MCF 10A (cell line): ENCODE measurements at regions of chr22 and their contacts with region 1.

Region 1: GRCh38 chr22:37741312-37741795 is 44.5 kb downstream of the TRIOBP start:
- DNase-seq: peak; percentile 96
- H3K4me3 Mint-ChIP-seq: no peak overlapping the region
- H3K27ac Mint-ChIP-seq: no peak overlapping the region
- H3K4me1 Mint-ChIP-seq: peaks cover 25% of the 10 kb centered on the region
- H3K27me3 Mint-ChIP-seq: no peaks in the 10 kb centered on the region
- CTCF ChIP-seq: no peak

Region 2: DNA sequence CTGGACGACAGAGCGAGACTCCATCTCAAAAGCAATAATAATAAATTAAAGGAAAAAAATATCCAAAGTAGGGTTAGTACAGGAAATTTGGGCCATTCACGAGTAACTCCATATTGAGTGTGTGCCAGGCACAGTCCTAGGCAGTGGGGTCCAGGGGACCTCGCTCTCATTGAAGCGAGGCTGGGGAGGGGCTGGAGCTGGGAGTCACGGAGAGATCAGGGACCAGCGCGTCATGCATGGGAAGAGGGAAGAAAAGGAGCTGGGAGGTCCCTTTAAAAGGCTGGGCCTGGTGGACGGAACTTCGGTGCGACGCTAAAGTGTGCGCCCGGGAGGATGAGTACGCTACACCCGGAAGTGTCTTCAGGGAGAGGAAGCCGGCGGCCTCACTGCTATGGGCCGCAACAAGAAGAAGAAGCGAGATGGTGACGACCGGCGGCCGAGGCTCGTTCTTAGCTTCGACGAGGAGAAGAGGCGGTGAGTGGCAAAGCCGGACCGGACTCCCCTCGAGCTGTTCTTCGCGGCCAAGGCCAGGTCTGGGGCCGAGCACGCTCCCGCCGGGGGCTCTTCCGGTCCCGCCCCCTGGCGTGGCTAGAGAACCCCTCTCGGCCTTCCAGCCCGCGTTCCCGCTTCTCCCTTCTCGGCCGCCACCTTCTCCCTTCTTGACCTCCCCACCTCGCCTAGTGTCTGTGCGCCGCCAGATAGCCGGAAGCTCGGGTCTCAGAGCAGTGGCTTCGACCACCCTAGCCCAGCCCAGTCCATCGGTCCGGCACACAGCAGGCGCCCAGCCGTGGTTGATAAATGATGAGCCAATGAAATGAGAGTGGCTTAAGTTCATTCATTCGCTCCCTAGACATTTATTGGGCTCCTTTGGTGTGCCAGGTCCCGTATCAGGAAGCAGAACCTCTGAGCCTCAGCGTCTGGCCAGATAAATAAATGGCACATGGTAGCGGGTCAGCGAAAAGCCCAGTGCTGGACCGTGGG is 55.1 kb before region 1 on chr22 and contains the start of gene NOL12:
- CTCF ChIA-PET with region 1: interaction called, 3 read pairs
- POLR2A ChIA-PET with region 1: interaction called, 17 read pairs
- intact Hi-C with region 1: no loop called
- DNase-seq: peak; percentile 90
- H3K4me3 Mint-ChIP-seq: peak within 1 kb of the TSS; percentile 96
- H3K27ac Mint-ChIP-seq: peak within 1 kb of the TSS; percentile 96
- H3K4me1 Mint-ChIP-seq: peaks cover 30% of the 10 kb centered on the region
- H3K27me3 Mint-ChIP-seq: no peaks in the 10 kb centered on the region
- CTCF ChIP-seq: no peak
- total RNA-seq, gene NOL12: 47.1 and 50.8 TPM in 2 replicates

Region 3: DNA sequence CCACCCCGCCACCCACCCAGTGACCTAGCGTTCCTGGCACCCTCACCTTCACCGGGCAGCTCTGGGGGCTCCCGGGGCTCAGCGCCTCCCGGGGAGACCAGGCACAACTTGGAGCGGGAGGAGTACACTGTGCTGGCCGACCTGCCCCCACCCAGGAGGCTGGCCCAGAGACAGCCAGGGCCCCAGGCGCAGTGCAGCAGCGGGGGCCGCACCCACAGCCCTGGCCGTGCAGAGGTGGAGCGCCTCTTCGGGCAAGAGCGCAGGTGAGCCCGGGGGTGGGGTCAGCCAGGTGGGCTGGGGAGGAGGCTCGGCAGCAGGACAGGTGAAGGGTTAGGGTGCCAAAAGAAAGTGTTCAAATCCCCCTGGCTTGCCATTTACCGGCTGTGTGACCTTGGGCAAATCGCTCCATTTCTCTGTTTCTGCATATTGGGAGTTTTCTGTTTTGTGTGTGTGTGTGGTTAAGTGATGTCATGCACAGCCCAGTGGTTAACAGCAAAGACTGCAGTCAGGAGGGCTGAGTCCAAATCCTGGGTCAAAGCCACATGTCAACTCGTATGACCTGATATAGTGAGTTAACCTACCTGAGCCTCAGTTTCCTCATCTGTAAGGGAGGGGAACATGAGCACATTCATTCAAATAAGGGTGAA is 15.0 kb before region 1 on chr22:
- CTCF ChIA-PET with region 1: interaction called, 6 read pairs
- POLR2A ChIA-PET with region 1: interaction called, 14 read pairs
- intact Hi-C with region 1: no loop called
- DNase-seq: peak; percentile 31
- H3K4me3 Mint-ChIP-seq: no peak overlapping the region
- H3K27ac Mint-ChIP-seq: no peak overlapping the region
- H3K4me1 Mint-ChIP-seq: no peaks in the 10 kb centered on the region
- H3K27me3 Mint-ChIP-seq: peaks cover 20% of the 10 kb centered on the region
- CTCF ChIP-seq: no peak

Region 4: DNA sequence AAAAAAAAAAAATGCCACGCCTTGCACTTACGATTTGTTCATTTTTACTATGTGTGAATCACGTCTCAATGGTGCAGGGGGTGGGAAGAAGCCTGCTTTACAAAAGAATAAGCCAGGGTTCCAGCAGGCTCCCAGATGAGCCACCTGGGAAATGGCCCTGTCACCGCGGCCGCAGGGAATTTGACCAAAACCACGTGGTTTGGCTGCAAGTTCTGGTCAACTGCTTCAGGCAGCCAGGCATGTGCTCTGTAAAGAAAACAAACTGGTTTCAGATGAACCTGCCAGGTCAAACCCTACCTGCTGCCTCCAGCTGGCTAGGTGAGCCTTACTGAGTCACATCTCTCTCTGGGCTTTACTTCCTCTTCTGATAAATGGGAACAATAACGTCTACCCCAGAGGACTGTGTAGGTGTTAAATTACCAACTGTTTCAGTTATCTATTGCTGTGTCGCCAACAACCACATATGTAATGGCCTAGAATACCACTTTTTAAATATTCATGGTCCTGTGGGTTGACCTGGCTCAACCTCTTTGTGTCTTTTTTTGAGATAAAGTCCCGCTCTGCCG is 35.9 kb after region 1 on chr22:
- CTCF ChIA-PET with region 1: no interaction called
- POLR2A ChIA-PET with region 1: interaction called, 13 read pairs
- intact Hi-C with region 1: no loop called
- DNase-seq: peak; percentile 97
- H3K4me3 Mint-ChIP-seq: peak overlapping the region; percentile 51
- H3K27ac Mint-ChIP-seq: peak overlapping the region; percentile 76
- H3K4me1 Mint-ChIP-seq: peaks cover 20% of the 10 kb centered on the region
- H3K27me3 Mint-ChIP-seq: no peaks in the 10 kb centered on the region
- CTCF ChIP-seq: no peak